Heart right ventricle (tissue), 16 donors: ENCODE measurements at regions of chr20 and their contacts with region 1.

Region 1: GRCh38 chr20:20568604-20569205 is 143.7 kb downstream of the RALGAPA2 start:
- DNase-seq: no peak
- ATAC-seq: peak in 1 of 8 donors; percentile 42
- H3K4me3 ChIP-seq: no peak overlapping the region
- H3K27ac ChIP-seq: no peak overlapping the region
- H3K4me1 ChIP-seq: peaks cover 0 to 3% (median 0%) of the 10 kb centered on the region in 9 donors
- H3K27me3 ChIP-seq: no peaks in the 10 kb centered on the region
- CTCF ChIP-seq: peak; percentile 22 to 72 (median 65)

Region 2: DNA sequence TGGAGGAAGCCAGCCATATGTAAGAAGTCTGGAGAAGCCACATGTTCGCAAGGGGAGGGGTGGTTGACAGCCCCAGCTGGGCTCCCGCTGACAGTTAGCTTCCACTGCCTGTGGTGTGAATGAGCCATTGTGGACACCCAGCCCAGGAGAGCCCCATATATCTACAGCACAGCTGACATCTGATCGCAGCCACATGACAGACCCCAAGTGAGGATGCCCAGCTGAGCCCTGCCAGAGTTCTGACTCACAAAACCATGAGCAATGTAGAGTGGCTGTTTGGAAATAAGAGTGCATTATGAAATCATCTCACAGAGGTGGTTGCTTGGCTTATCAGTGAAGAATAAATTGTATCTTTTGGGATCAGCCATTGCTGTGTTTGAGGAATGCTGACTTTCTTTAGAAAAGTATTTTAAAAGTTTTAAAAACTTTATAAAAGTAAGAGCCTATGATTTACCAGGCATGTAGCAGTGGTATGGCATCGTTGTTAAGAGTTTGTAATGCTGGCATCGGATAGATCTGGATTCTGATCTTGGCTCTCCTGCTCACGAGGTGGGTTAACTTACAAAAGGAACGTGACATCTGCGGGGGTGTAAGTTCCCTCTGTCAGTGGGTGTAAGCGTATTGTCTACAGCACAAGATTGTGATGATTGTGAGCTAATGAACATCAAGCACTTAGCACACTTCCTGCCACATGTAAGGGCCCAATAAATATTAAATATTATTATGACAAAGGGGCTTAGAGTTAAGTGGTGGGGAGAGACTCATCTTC is 492.2 kb before region 1 on chr20:
- intact Hi-C with region 1: loop called in 8 of 10 experiments (anchors 2 to 10 kb)
- DNase-seq: no peak
- ATAC-seq: peak in 1 of 8 donors; percentile 52
- H3K4me3 ChIP-seq: no peak overlapping the region
- H3K27ac ChIP-seq: no peak overlapping the region
- H3K4me1 ChIP-seq: peaks cover 0 to 7% (median 0%) of the 10 kb centered on the region in 9 donors
- H3K27me3 ChIP-seq: peaks cover 0 to 21% (median 5%) of the 10 kb centered on the region in 7 donors
- CTCF ChIP-seq: no peak

Region 3: GRCh38 chr20:20237093-20237959 is 331.4 kb before region 1 on chr20:
- intact Hi-C with region 1: no loop called
- DNase-seq: peak in 1 of 2 donors; percentile 37
- ATAC-seq: peak in 7 of 8 donors; percentile 55 to 76 (median 69)
- H3K4me3 ChIP-seq: no peak overlapping the region
- H3K27ac ChIP-seq: no peak overlapping the region
- H3K4me1 ChIP-seq: peaks cover 0 to 10% (median 0%) of the 10 kb centered on the region in 9 donors
- H3K27me3 ChIP-seq: peaks cover 0 to 9% (median 0%) of the 10 kb centered on the region in 7 donors
- CTCF ChIP-seq: peak; percentile 52 to 82 (median 71)

Region 4: DNA sequence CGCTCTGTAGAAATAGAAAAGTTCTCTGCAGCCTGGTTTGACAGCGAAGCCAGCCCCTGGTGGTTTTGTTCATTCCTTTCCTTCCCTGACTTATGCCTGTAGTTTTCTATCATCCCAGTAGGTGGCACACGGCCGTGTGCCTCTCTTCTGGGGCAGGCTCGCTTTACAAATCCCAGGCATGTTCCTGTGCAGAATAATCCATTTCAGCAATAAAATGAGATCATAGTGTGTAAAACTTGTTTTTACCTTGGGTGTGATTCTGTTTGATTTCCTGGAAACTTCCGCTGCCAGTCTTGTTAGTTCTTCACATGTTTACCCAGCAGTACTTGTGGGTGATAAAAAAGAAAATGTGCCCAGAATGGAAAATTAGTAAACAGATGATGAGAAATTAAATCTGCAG is 208.2 kb before region 1 on chr20:
- intact Hi-C with region 1: loop called in 9 of 10 experiments (anchors 2 to 10 kb)
- DNase-seq: peak in 1 of 2 donors; percentile 26
- ATAC-seq: peak in 7 of 8 donors; percentile 65 to 84 (median 72)
- H3K4me3 ChIP-seq: no peak overlapping the region
- H3K27ac ChIP-seq: no peak overlapping the region
- H3K4me1 ChIP-seq: peaks cover 0 to 22% (median 9%) of the 10 kb centered on the region in 9 donors
- H3K27me3 ChIP-seq: peaks cover 14 to 62% (median 42%) of the 10 kb centered on the region in 7 donors
- CTCF ChIP-seq: peak; percentile 21 to 81 (median 73)

Region 5: GRCh38 chr20:21677731-21678130 is 1109.0 kb after region 1 on chr20:
- intact Hi-C with region 1: no loop called
- DNase-seq: no peak
- ATAC-seq: no peak
- H3K4me3 ChIP-seq: no peak overlapping the region
- H3K27ac ChIP-seq: no peak overlapping the region
- H3K4me1 ChIP-seq: no peaks in the 10 kb centered on the region
- H3K27me3 ChIP-seq: peaks cover 0 to 19% (median 0%) of the 10 kb centered on the region in 7 donors
- CTCF ChIP-seq: no peak